Activated CD4-positive, alpha-beta T cell treated with anti-CD3 and anti-CD28 coated beads, Interleukin-2, amount 10 ng/mL, durations not matched to agents 7 days and 5 days (primary cell): ENCODE measurements at regions of chr1 and their contacts with region 1.

Region 1: DNA sequence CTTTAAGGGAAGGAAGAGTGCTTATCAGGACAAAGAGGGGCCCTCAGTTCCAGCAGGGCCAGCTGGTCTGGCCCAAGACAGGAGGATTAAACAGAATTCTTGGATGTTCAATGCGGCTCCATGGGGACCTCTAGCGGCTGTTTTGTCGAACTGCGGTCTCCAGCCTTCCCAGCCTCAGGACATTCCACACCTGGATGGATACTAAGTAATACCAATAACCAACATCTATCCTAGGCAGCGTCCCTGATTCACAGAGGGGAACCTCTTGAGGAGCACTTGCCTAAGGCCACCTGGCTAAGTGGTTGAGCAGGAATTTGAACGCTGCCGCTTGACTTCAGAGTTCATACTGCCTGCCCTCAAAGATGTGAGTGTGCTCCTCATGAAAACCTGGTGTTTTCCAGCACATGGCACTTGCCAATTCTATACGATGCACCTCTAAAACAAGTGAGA is 15.5 kb upstream of the CD247 start:
- DNase-seq: peak; percentile 68
- H3K4me3 Mint-ChIP-seq: no peak overlapping the region
- H3K27ac Mint-ChIP-seq: no peak overlapping the region
- H3K4me1 Mint-ChIP-seq: peaks cover 6% of the 10 kb centered on the region
- H3K27me3 Mint-ChIP-seq: no peaks in the 10 kb centered on the region

Region 2: DNA sequence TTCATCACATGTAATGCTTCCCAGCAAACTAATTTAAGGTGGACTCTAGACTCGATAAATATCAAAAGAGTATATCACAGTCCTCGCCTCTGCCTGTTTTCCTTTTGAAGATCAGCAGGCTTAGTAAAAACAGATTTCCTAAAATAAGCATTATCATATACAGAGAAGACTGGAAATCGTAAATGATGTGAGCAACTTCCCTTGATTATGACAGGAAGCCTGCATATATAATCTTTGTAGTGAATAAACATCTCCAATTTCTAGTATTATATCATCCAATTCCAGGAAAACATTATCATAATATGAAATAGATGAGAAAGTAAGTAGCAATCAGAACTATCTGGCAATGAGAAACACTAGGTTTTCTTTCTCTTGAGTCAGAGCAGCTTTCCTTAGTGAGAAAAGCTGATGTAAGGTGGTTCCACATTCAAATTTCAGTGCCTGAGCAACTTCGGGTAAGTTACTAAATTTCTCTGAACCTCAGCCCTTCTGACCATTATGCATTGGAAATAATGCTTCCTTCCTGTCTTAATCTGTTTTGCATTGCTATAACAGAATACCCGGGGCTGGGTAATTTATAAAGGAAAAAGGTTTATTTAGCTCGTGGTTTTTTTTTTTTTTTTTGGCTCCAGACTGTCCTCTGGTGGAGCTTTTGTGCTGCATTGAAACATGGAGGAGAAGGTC is 325.8 kb before region 1 on chr1:
- CTCF ChIA-PET with region 1: no interaction called
- POLR2A ChIA-PET with region 1: no interaction called
- DNase-seq: no peak
- H3K4me3 Mint-ChIP-seq: no peak overlapping the region
- H3K27ac Mint-ChIP-seq: no peak overlapping the region
- H3K4me1 Mint-ChIP-seq: peaks cover 8% of the 10 kb centered on the region
- H3K27me3 Mint-ChIP-seq: peaks cover 2% of the 10 kb centered on the region

Region 3: DNA sequence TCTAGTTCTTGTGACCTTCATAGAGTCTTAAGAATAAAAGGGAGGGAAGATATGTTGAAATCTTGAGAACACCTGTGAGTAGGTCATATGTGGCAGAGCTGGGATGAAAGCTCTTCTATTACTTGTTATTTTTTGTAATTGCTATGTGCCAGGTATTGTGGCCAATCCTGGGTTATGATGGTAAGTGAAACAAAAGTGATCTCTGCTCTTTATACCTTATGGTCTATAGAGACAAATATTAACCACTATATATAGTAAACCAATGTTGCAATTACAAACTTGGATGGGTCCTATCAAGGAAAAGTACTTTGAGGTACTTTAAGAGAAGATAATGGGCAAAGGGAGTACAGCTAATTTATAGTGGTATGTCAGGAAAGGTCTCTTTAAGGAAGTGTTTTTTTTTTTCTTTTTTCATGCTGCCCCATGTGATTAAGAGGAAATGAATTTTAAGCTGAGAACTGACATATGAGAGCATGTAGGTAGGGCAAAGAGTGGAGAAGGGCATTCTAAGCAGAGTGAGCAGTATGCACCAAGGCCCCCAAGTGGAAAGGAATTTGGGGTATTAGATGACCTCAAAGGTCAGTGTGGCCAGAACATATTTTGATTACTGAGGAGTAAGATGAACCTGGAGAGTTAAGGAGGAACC is 269.9 kb before region 1 on chr1:
- CTCF ChIA-PET with region 1: interaction called, 11 read pairs
- POLR2A ChIA-PET with region 1: no interaction called
- DNase-seq: no peak
- H3K4me3 Mint-ChIP-seq: no peak overlapping the region
- H3K27ac Mint-ChIP-seq: no peak overlapping the region
- H3K4me1 Mint-ChIP-seq: peaks cover 27% of the 10 kb centered on the region
- H3K27me3 Mint-ChIP-seq: no peaks in the 10 kb centered on the region

Region 4: DNA sequence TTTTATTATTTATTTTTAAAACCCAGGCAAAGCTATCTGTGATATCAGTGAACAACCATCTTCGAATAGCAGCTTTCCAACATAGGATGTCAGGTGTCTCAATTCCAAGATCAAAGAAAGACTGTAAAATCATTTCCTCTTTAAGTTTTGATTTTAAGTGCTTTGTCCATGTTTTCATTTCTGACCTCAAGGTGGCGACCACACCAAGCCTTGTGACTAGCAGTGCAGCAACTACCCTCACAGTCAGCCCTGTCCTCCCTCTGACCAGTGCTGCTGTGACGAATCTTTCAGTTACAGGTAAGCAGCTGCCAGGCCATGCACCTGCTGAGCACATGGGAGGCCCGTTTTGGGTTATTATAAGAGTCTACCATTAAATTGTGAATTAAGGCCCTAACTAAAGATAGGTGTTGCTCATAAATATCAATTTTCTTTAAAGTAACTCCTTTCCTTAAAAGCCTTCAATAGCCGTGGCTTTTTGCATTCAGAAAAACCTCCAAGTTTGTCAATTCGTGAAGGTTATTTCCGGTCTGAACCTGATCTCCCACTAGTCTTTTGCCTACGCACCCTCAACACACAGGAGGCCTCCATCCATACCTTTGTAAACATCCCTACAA is 132.5 kb before region 1 on chr1:
- CTCF ChIA-PET with region 1: interaction called, 10 read pairs
- POLR2A ChIA-PET with region 1: no interaction called
- DNase-seq: peak; percentile 59
- H3K4me3 Mint-ChIP-seq: no peak overlapping the region
- H3K27ac Mint-ChIP-seq: no peak overlapping the region
- H3K4me1 Mint-ChIP-seq: peaks cover 8% of the 10 kb centered on the region
- H3K27me3 Mint-ChIP-seq: no peaks in the 10 kb centered on the region

Region 5: DNA sequence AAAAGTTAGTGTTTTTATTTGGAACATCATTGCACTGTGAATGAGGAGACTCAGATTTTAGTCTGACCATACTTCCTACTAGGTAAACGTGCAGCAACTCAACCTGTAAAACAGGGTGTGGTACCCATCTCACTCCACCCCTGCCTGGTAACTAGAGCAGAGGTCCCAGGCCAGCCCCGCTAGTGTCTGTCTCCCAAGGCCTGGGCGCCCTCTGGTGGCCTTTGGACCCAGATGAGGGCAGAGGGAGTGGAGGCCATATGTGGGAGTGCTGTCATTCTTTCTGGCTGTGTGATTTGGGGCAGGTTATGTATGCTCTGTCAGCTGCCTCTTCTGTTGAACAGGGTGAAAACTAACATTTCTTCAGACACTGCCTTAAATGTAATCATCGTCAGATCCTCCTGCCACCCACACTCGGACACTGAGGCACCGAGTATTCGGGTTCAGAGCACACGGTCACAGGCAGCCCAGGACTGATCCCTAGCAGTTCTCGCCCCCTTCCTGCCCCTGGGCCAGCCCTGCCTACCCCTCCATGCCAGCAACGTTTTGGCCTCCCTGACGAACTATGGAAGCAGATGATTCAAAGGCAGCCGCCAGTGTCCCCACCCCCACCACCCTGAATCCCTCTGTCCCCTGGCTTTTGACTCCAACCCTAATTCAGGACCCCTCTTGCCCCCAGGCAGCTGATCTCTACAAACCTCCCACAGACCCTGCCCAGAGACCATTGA is 91.6 kb before region 1 on chr1:
- CTCF ChIA-PET with region 1: interaction called, 11 read pairs
- POLR2A ChIA-PET with region 1: no interaction called
- DNase-seq: peak; percentile 90
- H3K4me3 Mint-ChIP-seq: peak overlapping the region; percentile 27
- H3K27ac Mint-ChIP-seq: peak overlapping the region; percentile 90
- H3K4me1 Mint-ChIP-seq: peaks cover 94% of the 10 kb centered on the region
- H3K27me3 Mint-ChIP-seq: no peaks in the 10 kb centered on the region

Region 6: DNA sequence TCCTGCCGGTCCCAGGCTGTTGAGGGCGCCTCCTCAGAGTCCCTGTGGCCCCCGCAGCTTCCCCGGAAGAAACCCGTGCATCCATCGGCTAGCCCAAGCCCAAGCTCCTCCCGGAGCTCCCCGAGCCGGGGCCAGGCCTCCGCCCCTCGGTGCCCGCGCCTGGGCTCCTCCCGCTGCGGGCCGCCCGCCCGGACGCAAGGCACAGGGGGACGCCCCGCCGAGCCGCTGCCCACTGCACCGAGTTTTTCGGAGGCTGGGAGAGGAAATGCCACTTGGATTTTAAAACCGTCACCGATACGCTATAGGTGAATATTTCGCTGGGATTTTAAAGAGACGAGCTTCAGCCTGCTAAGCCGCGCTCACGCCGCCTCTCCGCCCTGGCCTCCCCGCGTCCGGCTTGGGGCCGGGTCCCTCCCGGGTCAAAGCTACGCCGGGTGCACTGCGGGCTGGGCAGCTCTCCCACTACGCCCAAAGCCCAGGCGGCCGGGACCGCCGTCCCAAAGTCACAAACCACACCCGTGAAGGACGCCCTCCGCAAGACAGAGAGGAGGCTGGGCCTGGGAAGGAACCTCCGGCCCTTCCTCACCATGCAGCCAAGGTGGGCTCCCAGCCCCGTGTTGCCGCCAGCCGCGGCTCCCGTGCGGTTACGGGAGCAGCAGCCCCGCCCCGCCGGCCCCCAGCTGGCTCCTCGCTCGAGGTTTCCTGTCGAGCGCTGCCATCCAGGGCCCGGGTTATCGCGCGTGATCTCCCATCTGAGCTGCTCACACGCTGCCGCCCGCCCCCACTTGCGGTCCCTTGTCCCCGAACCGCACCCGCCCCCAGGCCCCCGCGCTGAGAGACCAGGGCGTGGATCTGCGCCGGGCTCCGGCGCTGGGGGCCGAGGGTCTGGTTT is 78.7 kb before region 1 on chr1:
- CTCF ChIA-PET with region 1: interaction called, 13 read pairs
- POLR2A ChIA-PET with region 1: no interaction called
- DNase-seq: peak; percentile 85
- H3K4me3 Mint-ChIP-seq: peak overlapping the region; percentile 77
- H3K27ac Mint-ChIP-seq: peak overlapping the region; percentile 54
- H3K4me1 Mint-ChIP-seq: peaks cover 71% of the 10 kb centered on the region
- H3K27me3 Mint-ChIP-seq: no peaks in the 10 kb centered on the region

Region 7: DNA sequence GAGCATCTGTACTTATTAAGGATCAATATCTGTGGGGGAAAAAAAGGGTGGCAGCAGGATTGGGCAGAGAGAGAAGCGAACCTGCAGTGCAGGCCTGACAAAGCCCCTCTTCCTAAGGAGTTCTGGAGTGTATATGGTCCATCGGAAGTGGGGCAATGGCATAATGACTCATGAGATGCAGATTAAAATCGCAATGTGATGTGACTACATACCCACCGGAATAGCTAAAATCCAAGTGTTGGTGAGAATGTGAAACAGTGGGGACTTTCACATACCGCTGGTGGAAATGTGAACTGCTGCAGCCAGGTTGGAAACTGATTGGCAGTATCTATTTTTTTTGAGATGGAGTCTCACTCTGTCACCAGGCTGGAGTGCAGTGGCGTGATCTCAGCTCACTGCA is 27.9 kb after region 1 on chr1:
- CTCF ChIA-PET with region 1: no interaction called
- POLR2A ChIA-PET with region 1: no interaction called
- DNase-seq: no peak
- H3K4me3 Mint-ChIP-seq: no peak overlapping the region
- H3K27ac Mint-ChIP-seq: no peak overlapping the region
- H3K4me1 Mint-ChIP-seq: no peaks in the 10 kb centered on the region
- H3K27me3 Mint-ChIP-seq: peaks cover 15% of the 10 kb centered on the region